PC-3 (cell line): ENCODE measurements at regions of chr11 and their contacts with region 1.

Region 1: DNA sequence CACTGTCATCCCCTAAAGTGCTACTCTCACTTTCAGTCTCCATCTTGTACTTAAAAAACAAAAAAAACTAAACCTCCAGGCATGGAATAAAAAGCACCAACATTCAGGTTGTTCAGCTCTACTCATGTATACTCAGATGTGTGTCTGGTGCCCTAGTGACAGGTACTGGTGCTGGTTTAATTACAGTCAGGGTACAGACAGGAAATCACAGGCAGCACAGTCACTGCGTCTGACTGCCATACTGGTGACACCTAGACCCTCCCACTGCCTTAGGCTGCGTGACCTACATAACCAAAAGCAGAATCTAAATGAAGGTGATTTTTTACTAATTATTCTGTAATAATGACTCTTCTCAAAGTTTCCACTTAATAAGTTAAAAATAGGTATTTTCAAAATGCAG is at the start of gene ARHGAP32:
- DNase-seq: peak; percentile 33
- ATAC-seq: peak; percentile 57
- H3K4me3 ChIP-seq: peak within 1 kb of the TSS; percentile 16; the same call in 1 of the 2 replicates
- H3K27ac ChIP-seq: peak within 1 kb of the TSS; percentile 26
- H3K4me1 ChIP-seq: peaks cover 28% of the 10 kb centered on the region
- H3K27me3 ChIP-seq: no peaks in the 10 kb centered on the region
- CTCF ChIP-seq: no peak
- total RNA-seq, gene ARHGAP32: 12.0 and 13.7 TPM in 2 replicates

Region 2: DNA sequence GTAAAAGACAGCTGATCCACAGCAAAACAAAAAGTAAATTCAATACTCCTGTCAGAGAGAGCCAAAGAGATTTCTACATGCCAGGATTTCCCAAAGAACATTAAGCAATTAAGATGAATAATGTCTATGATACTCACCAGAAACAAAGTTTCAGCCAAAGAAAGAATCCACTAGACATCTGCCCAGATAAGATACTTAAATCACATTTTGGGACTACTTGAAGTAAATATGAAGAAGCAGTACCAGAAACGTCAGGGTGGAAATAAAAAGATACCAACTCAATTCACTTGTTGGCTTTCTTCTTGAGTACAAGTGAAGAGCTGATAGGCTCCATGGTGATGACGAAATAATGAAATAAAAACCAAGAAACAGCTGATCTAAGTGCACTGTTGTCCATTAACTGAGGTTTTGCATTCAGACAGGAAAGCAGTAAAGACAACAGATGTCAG is 31.6 kb after region 1 on chr11:
- CTCF ChIA-PET with region 1: no interaction called
- POLR2A ChIA-PET with region 1: no interaction called
- intact Hi-C with region 1: loop called (anchors 2 kb)
- DNase-seq: no peak
- ATAC-seq: no peak
- H3K4me3 ChIP-seq: no peak overlapping the region
- H3K27ac ChIP-seq: no peak overlapping the region; the same call in 1 of the 2 replicates
- H3K4me1 ChIP-seq: peaks cover 21% of the 10 kb centered on the region
- H3K27me3 ChIP-seq: no peaks in the 10 kb centered on the region
- CTCF ChIP-seq: no peak

Region 3: GRCh38 chr11:129234978-129235377 is 42.8 kb after region 1 on chr11:
- CTCF ChIA-PET with region 1: no interaction called
- POLR2A ChIA-PET with region 1: no interaction called
- intact Hi-C with region 1: no loop called
- DNase-seq: no peak
- ATAC-seq: no peak
- H3K4me3 ChIP-seq: no peak overlapping the region
- H3K27ac ChIP-seq: no peak overlapping the region
- H3K4me1 ChIP-seq: no peaks in the 10 kb centered on the region
- H3K27me3 ChIP-seq: no peaks in the 10 kb centered on the region
- CTCF ChIP-seq: no peak

Region 4: GRCh38 chr11:129375751-129376657 is 183.8 kb after region 1 on chr11 and contains the start of gene BARX2:
- CTCF ChIA-PET with region 1: no interaction called
- POLR2A ChIA-PET with region 1: no interaction called
- intact Hi-C with region 1: no loop called
- DNase-seq: peak; percentile 86
- ATAC-seq: peak; percentile 94
- H3K4me3 ChIP-seq: peak within 1 kb of the TSS; percentile 63
- H3K27ac ChIP-seq: no peak within 1 kb of the TSS
- H3K4me1 ChIP-seq: peaks cover 19% of the 10 kb centered on the region; the same call in 1 of the 2 replicates
- H3K27me3 ChIP-seq: peaks cover 81% of the 10 kb centered on the region
- CTCF ChIP-seq: peak; percentile 73
- total RNA-seq, gene BARX2: 0.47 and 1.2 TPM in 2 replicates